Panc1 (cell line): ENCODE measurements at regions of chr20 and their contacts with region 1.

Region 1: GRCh38 chr20:2523919-2524708 is 12.3 kb upstream of the TMC2 start:
- DNase-seq: no peak
- ATAC-seq: peak; percentile 90
- H3K4me3 ChIP-seq: peak overlapping the region; percentile 83 to 92
- H3K27ac ChIP-seq: peak overlapping the region; percentile 80
- H3K4me1 ChIP-seq: no peaks in the 10 kb centered on the region
- H3K27me3 ChIP-seq: peaks cover under 1% of the 10 kb centered on the region; the same call in 1 of the 2 replicates
- CTCF ChIP-seq: peak; percentile 99

Region 2: DNA sequence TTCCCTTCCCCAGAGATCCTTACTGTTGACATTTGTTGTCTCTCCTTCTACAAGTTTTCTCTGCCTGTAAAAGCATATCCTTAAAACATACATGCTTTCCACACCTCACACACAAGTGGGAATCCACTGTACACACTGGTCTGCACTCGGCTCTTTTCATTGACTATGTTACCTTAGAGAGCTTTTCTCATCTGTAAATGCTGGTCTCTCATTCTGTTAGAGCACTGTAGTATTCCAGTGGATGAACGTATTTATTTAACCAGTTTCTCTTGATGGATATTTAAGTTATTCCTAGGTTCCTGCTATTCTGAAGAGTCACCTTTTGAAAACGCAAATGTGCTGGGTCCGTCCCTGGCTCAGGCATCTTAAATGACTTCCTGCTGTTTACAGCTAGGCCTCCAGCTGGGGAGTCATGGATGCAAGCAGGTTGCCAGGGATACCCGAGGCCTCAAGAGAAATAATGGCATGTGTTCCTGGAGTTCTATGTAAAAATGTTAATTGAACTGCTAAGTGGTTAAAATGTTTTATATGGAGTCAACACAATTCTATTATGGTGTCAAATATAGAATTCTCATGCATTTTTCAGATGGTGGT is 289.4 kb before region 1 on chr20:
- CTCF ChIA-PET with region 1: no interaction called
- POLR2A ChIA-PET with region 1: no interaction called
- in situ Hi-C with region 1: no loop called
- intact Hi-C with region 1: no loop called
- DNase-seq: no peak
- ATAC-seq: no peak
- H3K4me3 ChIP-seq: no peak overlapping the region
- H3K27ac ChIP-seq: no peak overlapping the region
- H3K4me1 ChIP-seq: no peaks in the 10 kb centered on the region
- H3K27me3 ChIP-seq: no peaks in the 10 kb centered on the region
- CTCF ChIP-seq: no peak

Region 3: DNA sequence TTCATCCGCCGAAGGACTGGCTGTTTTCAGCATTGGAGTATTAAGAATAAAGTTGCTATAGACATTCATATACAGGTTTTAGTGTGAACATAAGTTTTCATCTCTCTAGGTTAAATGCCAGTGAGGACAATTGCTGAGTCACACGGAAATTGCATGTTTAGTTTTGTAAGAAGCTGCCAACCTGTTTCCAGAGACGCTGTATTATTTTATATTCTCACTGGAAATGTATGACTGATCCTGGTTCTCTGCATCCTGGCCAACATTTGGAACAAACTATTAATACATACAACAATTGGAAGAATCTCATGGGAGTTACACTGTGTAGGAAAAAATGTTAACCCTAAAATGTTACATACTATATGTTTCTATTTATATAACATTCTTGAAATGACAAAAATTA is 160.1 kb before region 1 on chr20:
- CTCF ChIA-PET with region 1: no interaction called
- POLR2A ChIA-PET with region 1: interaction called, 11 read pairs
- in situ Hi-C with region 1: no loop called
- intact Hi-C with region 1: no loop called
- DNase-seq: no peak
- ATAC-seq: no peak
- H3K4me3 ChIP-seq: no peak overlapping the region
- H3K27ac ChIP-seq: no peak overlapping the region
- H3K4me1 ChIP-seq: no peaks in the 10 kb centered on the region
- H3K27me3 ChIP-seq: 0 out of 2 replicates have a peak, but pooled peaks cover 2% of the 10 kb centered on the region
- CTCF ChIP-seq: no peak

Region 4: GRCh38 chr20:2626853-2627541 is 102.9 kb after region 1 on chr20:
- CTCF ChIA-PET with region 1: no interaction called
- POLR2A ChIA-PET with region 1: no interaction called
- in situ Hi-C with region 1: no loop called
- intact Hi-C with region 1: no loop called
- DNase-seq: no peak
- ATAC-seq: no peak
- H3K4me3 ChIP-seq: no peak overlapping the region
- H3K27ac ChIP-seq: no peak overlapping the region
- H3K4me1 ChIP-seq: no peaks in the 10 kb centered on the region
- H3K27me3 ChIP-seq: peaks cover 2% of the 10 kb centered on the region; the same call in 1 of the 2 replicates
- CTCF ChIP-seq: no peak

Region 5: GRCh38 chr20:2651772-2652723 is 127.9 kb after region 1 on chr20 and contains the start of gene NOP56:
- CTCF ChIA-PET with region 1: no interaction called
- POLR2A ChIA-PET with region 1: no interaction called
- in situ Hi-C with region 1: no loop called
- intact Hi-C with region 1: loop called (anchors 2 kb)
- DNase-seq: no peak
- ATAC-seq: peak; percentile 96
- H3K4me3 ChIP-seq: peak within 1 kb of the TSS; percentile 80 to 99
- H3K27ac ChIP-seq: peak within 1 kb of the TSS; percentile 96
- H3K4me1 ChIP-seq: peaks cover 16% of the 10 kb centered on the region
- H3K27me3 ChIP-seq: no peaks in the 10 kb centered on the region
- CTCF ChIP-seq: no peak
- total RNA-seq, gene NOP56: 354 TPM

Region 6: GRCh38 chr20:2663887-2664719 is 140.0 kb after region 1 on chr20 and contains the start of gene IDH3B:
- CTCF ChIA-PET with region 1: interaction called, 6 read pairs
- POLR2A ChIA-PET with region 1: interaction called, 11 read pairs
- in situ Hi-C with region 1: no loop called
- intact Hi-C with region 1: no loop called
- DNase-seq: no peak
- ATAC-seq: peak; percentile 97
- H3K4me3 ChIP-seq: peak within 1 kb of the TSS; percentile 65 to 97
- H3K27ac ChIP-seq: peak within 1 kb of the TSS; percentile 99
- H3K4me1 ChIP-seq: peaks cover 9% of the 10 kb centered on the region
- H3K27me3 ChIP-seq: no peaks in the 10 kb centered on the region
- CTCF ChIP-seq: no peak
- total RNA-seq, gene IDH3B: 135 TPM

Region 7: DNA sequence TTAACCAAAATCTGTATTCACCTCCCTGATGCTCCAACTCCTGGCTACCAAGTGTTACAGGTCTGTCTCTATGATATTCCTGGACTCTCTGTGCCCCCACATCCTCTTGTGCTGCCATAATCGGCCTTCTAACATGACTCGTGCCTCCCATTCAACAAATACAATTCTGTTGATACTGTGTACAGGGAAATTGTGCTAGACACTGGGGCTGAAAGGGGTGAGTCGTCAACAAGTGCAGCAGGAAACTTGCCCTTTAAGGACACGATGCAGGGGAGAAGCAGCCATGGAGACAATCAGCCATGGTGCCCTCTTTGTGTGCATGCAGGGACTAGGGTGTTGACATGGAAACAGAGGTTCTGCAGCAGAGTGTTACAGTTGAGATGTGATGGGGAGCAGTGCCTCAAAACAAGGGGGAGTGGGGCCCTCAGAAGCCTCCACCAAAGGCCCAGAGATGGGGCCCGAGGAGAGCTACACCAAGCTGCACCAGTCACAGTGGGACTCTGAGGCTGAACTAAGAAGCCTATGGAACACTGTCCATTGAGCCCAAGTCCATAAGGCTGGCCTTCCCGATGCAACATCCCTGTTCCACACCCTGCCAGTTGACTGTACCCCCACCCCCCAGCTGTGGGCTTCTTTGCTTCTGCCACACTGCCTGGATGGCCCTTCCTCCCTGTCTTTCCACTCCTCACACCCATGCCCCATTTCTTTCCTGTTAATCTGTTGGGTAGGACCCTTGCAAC is 313.3 kb after region 1 on chr20:
- CTCF ChIA-PET with region 1: no interaction called
- POLR2A ChIA-PET with region 1: interaction called, 11 read pairs
- in situ Hi-C with region 1: no loop called
- intact Hi-C with region 1: no loop called
- DNase-seq: no peak
- ATAC-seq: no peak
- H3K4me3 ChIP-seq: no peak overlapping the region
- H3K27ac ChIP-seq: no peak overlapping the region
- H3K4me1 ChIP-seq: no peaks in the 10 kb centered on the region
- H3K27me3 ChIP-seq: no peaks in the 10 kb centered on the region
- CTCF ChIP-seq: no peak